ENCODE measurements at regions of chr9 and their contacts with region 1.

Region 1: GRCh38 chr9:85425153-85425611 is 316.6 kb downstream of the AGTPBP1 start:
- DNase-seq: peak; percentile 79
- ATAC-seq: peak; percentile 51
- H3K4me3 Mint-ChIP-seq: no peak overlapping the region
- H3K27ac Mint-ChIP-seq: no peak overlapping the region
- H3K4me1 Mint-ChIP-seq: peaks cover 4% of the 10 kb centered on the region
- H3K27me3 Mint-ChIP-seq: peaks cover 23% of the 10 kb centered on the region

Region 2: GRCh38 chr9:84668196-84669012 is 756.8 kb before region 1 on chr9:
- CTCF ChIA-PET with region 1: no interaction called
- POLR2A ChIA-PET with region 1: no interaction called
- intact Hi-C with region 1: loop called in 1 of 2 experiments (anchors 10 kb)
- DNase-seq: peak; percentile 81
- ATAC-seq: peak; percentile 91
- H3K4me3 Mint-ChIP-seq: peak overlapping the region; percentile 57
- H3K27ac Mint-ChIP-seq: no peak overlapping the region
- H3K4me1 Mint-ChIP-seq: peaks cover 15% of the 10 kb centered on the region
- H3K27me3 Mint-ChIP-seq: peaks cover 51% of the 10 kb centered on the region

Region 3: GRCh38 chr9:84748112-84748511 is 677.1 kb before region 1 on chr9:
- CTCF ChIA-PET with region 1: no interaction called
- POLR2A ChIA-PET with region 1: no interaction called
- intact Hi-C with region 1: no loop called
- DNase-seq: no peak
- ATAC-seq: no peak
- H3K4me3 Mint-ChIP-seq: no peak overlapping the region
- H3K27ac Mint-ChIP-seq: no peak overlapping the region
- H3K4me1 Mint-ChIP-seq: peaks cover 11% of the 10 kb centered on the region
- H3K27me3 Mint-ChIP-seq: peaks cover 4% of the 10 kb centered on the region

Region 4: DNA sequence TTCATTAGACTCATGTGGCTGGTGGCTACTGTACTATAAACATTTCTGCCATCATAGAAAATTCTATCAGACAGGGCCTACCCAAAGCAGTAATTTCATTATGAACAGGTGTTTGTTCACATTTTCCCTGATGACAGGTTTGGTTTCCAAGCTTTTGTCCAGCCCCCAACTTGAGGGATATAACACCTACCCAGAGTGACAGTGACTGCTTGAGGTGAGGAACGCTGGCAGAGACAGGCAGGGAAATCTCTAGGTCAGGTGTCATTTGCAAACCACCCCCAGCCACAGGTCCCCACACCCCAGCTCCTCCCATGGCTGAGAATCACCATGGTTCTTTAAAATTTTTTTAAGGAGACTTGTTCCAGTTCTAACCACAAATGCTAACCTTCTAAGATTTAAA is 648.7 kb after region 1 on chr9:
- CTCF ChIA-PET with region 1: no interaction called
- POLR2A ChIA-PET with region 1: interaction called, 11 read pairs
- intact Hi-C with region 1: no loop called
- DNase-seq: no peak
- ATAC-seq: peak; percentile 71
- H3K4me3 Mint-ChIP-seq: no peak overlapping the region
- H3K27ac Mint-ChIP-seq: no peak overlapping the region
- H3K4me1 Mint-ChIP-seq: peaks cover 12% of the 10 kb centered on the region
- H3K27me3 Mint-ChIP-seq: no peaks in the 10 kb centered on the region

Measured in activated CD4-positive, alpha-beta T cell treated with anti-CD3 and anti-CD28 coated beads for 36 hours (primary cell).